Mammary epithelial cell (primary cell): ENCODE measurements at regions of chr2 and their contacts with region 1.

Region 1: GRCh38 chr2:58762176-58762781 is 521.2 kb upstream of the FANCL start:
- DNase-seq: peak; percentile 65
- H3K4me3 ChIP-seq: no peak overlapping the region
- H3K27ac ChIP-seq: no peak overlapping the region
- H3K4me1 ChIP-seq: no peaks in the 10 kb centered on the region
- H3K27me3 ChIP-seq: peaks cover under 1% of the 10 kb centered on the region
- CTCF ChIP-seq: peak; percentile 69 to 83

Region 2: GRCh38 chr2:58571181-58571852 is 191.0 kb before region 1 on chr2:
- CTCF ChIA-PET with region 1: interaction called, 31 read pairs
- dilution Hi-C with region 1: no loop called
- in situ Hi-C with region 1: no loop called
- intact Hi-C with region 1: loop called (anchors 1 kb)
- DNase-seq: peak; percentile 69
- H3K4me3 ChIP-seq: no peak overlapping the region
- H3K27ac ChIP-seq: no peak overlapping the region
- H3K4me1 ChIP-seq: peaks cover 5% of the 10 kb centered on the region
- H3K27me3 ChIP-seq: no peaks in the 10 kb centered on the region
- CTCF ChIP-seq: peak; percentile 82 to 88

Region 3: DNA sequence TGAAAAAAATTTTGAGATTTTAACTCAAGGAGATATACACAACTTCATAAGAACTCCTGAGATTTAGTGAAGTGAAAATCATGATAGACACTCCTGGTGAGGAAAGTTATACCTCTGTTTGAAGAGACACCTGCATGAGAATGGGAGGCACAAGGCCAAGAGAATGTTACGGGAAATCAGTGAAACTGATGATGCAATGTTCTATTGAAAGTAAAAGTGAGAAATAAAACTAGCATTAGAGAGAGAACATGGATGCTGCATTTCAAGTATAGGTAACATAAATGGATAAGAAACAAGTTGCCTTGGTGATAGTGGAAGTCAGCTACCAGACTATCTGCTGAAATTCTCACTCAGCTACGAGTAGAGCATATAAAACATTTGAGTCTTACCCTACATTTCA is 40.9 kb after region 1 on chr2:
- CTCF ChIA-PET with region 1: no interaction called
- dilution Hi-C with region 1: no loop called
- in situ Hi-C with region 1: no loop called
- intact Hi-C with region 1: no loop called
- DNase-seq: no peak
- H3K4me3 ChIP-seq: no peak overlapping the region
- H3K27ac ChIP-seq: no peak overlapping the region
- H3K4me1 ChIP-seq: no peaks in the 10 kb centered on the region
- H3K27me3 ChIP-seq: no peaks in the 10 kb centered on the region
- CTCF ChIP-seq: no peak

Region 4: DNA sequence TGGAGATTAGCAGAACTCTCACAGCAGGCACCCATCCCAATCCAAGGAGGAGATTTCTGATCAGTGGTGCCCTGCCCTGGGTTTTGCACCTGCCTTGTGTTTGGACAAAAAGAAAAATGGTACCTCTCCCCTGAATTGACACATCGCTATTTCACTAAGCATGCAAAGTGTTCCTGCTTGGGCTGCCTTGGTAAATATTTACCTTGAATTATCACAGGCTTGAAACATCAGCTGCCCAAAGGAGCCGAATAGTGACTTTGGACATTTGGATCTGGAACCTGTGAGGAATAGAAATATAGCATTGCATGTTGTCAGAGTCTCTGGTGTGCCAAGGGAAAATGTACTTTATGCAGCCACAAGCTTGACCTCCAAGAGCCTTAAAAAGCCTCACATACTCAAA is 405.2 kb after region 1 on chr2:
- CTCF ChIA-PET with region 1: no interaction called
- dilution Hi-C with region 1: no loop called
- in situ Hi-C with region 1: no loop called
- intact Hi-C with region 1: loop called (anchors 5 kb)
- DNase-seq: no peak
- H3K4me3 ChIP-seq: no peak overlapping the region
- H3K27ac ChIP-seq: no peak overlapping the region
- H3K4me1 ChIP-seq: no peaks in the 10 kb centered on the region
- H3K27me3 ChIP-seq: no peaks in the 10 kb centered on the region
- CTCF ChIP-seq: no peak

Region 5: DNA sequence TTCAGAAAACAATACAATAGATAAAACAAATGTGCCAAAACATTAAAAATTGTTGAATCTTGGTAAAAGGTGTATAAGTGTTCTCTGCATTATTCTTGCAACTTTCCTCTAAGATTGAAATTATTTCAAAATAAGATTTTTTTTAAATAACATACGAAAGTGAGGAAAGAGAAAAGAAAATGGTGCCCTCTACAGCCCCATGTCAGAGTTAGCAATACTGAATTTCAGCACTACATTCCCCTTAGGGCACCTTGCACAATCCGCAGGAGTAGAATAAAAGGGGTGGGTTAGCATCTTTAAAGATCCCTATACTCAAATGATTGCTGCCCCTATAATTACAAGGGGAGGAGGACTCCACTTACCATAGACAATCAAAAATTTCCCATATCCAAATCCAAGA is 1357.5 kb after region 1 on chr2:
- CTCF ChIA-PET with region 1: no interaction called
- dilution Hi-C with region 1: no loop called
- in situ Hi-C with region 1: no loop called
- intact Hi-C with region 1: loop called (anchors 2 kb)
- DNase-seq: no peak
- H3K4me3 ChIP-seq: no peak overlapping the region
- H3K27ac ChIP-seq: no peak overlapping the region
- H3K4me1 ChIP-seq: no peaks in the 10 kb centered on the region
- H3K27me3 ChIP-seq: no peaks in the 10 kb centered on the region
- CTCF ChIP-seq: peak in 1 of 2 donors; percentile 22

Region 6: DNA sequence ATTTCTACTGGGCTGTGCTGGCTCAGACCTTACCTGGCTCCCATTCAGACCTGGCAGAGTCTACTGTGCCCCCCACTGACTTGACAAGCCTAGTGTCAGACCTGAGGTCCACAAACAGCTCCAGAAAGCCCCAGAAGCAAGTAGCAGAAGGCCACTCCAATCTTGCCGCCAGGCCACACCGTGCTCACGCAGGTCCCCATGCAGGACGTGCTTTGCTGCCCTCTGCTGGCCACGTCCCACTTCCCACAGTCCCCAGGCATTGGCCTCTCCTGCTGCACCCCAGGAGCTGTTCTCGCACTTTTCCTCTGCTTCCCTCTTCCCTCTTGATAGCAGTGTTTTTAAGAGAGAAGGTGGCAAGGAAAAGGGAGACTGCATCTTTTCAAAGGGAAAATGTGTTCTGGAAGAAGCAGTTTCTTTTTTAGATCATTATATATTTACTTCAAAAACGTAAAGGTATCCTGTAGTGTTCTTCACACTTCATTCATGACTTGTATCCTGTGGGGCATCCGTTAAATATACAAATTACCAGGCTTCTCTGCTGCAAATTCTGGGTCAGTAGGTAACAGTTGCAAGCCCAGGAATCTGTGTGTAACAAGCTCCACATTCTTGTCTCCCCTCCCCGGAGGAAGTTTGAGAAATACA is 1912.4 kb after region 1 on chr2:
- CTCF ChIA-PET with region 1: interaction called, 3 read pairs
- dilution Hi-C with region 1: no loop called
- in situ Hi-C with region 1: no loop called
- intact Hi-C with region 1: loop called (anchors 1 kb)
- DNase-seq: peak; percentile 53
- H3K4me3 ChIP-seq: no peak overlapping the region
- H3K27ac ChIP-seq: no peak overlapping the region
- H3K4me1 ChIP-seq: no peaks in the 10 kb centered on the region
- H3K27me3 ChIP-seq: no peaks in the 10 kb centered on the region
- CTCF ChIP-seq: peak; percentile 93 to 97